ENCODE measurements at regions of chr7 and their contacts with region 1.

Region 1: GRCh38 chr7:128381161-128381821 is 19.8 kb upstream of the PRRT4 start:
- DNase-seq: peak; percentile 81
- H3K4me3 Mint-ChIP-seq: no peak overlapping the region
- H3K27ac Mint-ChIP-seq: no peak overlapping the region
- H3K4me1 Mint-ChIP-seq: peaks cover 11% of the 10 kb centered on the region
- H3K27me3 Mint-ChIP-seq: no peaks in the 10 kb centered on the region
- CTCF ChIP-seq: peak; percentile 75

Region 2: DNA sequence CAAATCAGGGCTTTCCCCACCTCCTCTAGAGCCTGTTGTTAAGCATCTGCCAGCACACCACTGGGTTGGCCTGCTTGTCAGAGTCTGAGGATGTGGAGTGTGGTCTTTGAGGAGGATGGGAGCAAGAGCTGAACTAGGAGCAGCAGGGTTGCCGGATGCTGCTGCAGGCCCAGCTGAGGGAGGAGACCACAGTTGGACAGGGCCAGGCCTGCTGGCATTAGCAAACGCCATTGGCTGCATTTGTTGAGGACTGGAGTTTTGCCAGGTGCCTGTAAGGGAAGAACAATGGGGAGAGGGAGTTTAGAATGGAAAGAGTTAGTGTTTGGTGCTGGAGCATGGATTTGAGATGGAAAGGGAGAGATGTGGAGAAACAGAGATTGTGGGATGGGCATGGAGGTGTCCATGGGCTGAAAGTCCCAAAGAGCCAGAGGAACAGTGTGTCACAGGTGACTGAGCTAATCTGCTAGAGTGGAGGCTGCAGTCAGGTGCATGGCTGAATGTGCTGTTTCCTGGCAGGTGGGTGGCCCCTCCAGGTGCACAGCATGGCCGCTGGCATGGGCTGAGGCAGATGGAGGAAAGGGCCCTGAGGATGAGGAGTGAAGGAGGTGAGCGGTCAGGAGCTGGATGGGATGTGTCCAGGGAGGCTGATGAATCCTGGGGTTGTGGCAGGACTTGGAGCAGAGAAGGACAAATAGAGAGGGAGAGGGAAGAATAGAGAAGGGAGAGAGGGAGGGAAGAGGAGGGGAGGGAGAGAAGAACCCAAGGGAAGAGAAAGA is 99.5 kb before region 1 on chr7:
- CTCF ChIA-PET with region 1: no interaction called
- POLR2A ChIA-PET with region 1: no interaction called
- intact Hi-C with region 1: no loop called
- DNase-seq: no peak
- H3K4me3 Mint-ChIP-seq: no peak overlapping the region
- H3K27ac Mint-ChIP-seq: no peak overlapping the region
- H3K4me1 Mint-ChIP-seq: no peaks in the 10 kb centered on the region
- H3K27me3 Mint-ChIP-seq: no peaks in the 10 kb centered on the region
- CTCF ChIP-seq: no peak

Region 3: DNA sequence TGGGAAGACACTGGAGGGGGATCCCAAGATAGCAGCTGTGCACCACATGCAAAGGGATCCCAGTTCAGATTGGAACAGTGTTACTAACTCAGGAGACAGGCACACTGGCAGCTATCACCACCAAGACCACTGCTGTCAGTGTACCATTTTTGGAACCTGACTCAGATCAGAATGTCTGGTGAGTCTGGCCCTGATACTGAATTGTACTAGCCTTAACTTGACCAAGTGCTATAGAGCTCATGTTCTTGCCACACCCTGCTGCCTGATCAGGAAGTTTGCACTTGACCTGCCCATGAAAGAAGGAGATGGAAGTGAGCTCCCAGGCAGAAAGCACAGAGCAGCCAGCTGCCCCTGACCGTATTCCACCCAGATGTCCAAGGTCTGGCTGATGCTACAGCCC is 15.0 kb before region 1 on chr7:
- CTCF ChIA-PET with region 1: interaction called, 14 read pairs
- POLR2A ChIA-PET with region 1: interaction called, 4 read pairs
- intact Hi-C with region 1: no loop called
- DNase-seq: no peak
- H3K4me3 Mint-ChIP-seq: no peak overlapping the region
- H3K27ac Mint-ChIP-seq: no peak overlapping the region
- H3K4me1 Mint-ChIP-seq: peaks cover 6% of the 10 kb centered on the region
- H3K27me3 Mint-ChIP-seq: peaks cover 11% of the 10 kb centered on the region
- CTCF ChIP-seq: no peak

Measured in MCF 10A (cell line).